HepG2 (cell line): ENCODE measurements at regions of chr7 and their contacts with region 1.

Region 1: GRCh38 chr7:79245623-79246249 is 207.7 kb downstream of the MAGI2 start:
- DNase-seq: peak; percentile 3
- ATAC-seq: peak; percentile 61; the same call in 2 of the 3 replicates
- H3K4me3 ChIP-seq: no peak overlapping the region
- H3K27ac ChIP-seq: no peak overlapping the region
- H3K4me1 ChIP-seq: no peaks in the 10 kb centered on the region
- H3K27me3 ChIP-seq: no peaks in the 10 kb centered on the region
- CTCF ChIP-seq: peak; percentile 42
- EP300 ChIP-seq: no peak
- POLR2A ChIP-seq: no peak
- RAD21 ChIP-seq: no peak

Region 2: GRCh38 chr7:79096361-79096805 is 149.4 kb before region 1 on chr7:
- CTCF ChIA-PET with region 1: no interaction called
- POLR2A ChIA-PET with region 1: no interaction called
- in situ Hi-C with region 1: loop called (anchors 5 kb)
- intact Hi-C with region 1: no loop called
- DNase-seq: no peak
- ATAC-seq: no peak
- H3K4me3 ChIP-seq: no peak overlapping the region
- H3K27ac ChIP-seq: no peak overlapping the region
- H3K4me1 ChIP-seq: no peaks in the 10 kb centered on the region
- H3K27me3 ChIP-seq: no peaks in the 10 kb centered on the region
- CTCF ChIP-seq: no peak
- EP300 ChIP-seq: no peak
- POLR2A ChIP-seq: no peak
- RAD21 ChIP-seq: no peak

Region 3: GRCh38 chr7:79182283-79182682 is 63.5 kb before region 1 on chr7:
- CTCF ChIA-PET with region 1: no interaction called
- POLR2A ChIA-PET with region 1: no interaction called
- in situ Hi-C with region 1: no loop called
- intact Hi-C with region 1: no loop called
- DNase-seq: no peak
- ATAC-seq: no peak
- H3K4me3 ChIP-seq: no peak overlapping the region
- H3K27ac ChIP-seq: no peak overlapping the region
- H3K4me1 ChIP-seq: no peaks in the 10 kb centered on the region
- H3K27me3 ChIP-seq: no peaks in the 10 kb centered on the region
- CTCF ChIP-seq: no peak
- EP300 ChIP-seq: no peak
- POLR2A ChIP-seq: no peak
- RAD21 ChIP-seq: no peak